ENCODE measurements at regions of chr7 and their contacts with region 1.

Region 1: GRCh38 chr7:151080522-151081169 is at the start of gene FASTK:
- DNase-seq: peak; percentile 71 to 95 (median 87)
- ATAC-seq: peak; percentile 65
- H3K4me3 ChIP-seq: peak within 1 kb of the TSS; percentile 74 to 95
- H3K4me3 Mint-ChIP-seq: peak within 1 kb of the TSS; percentile 85
- H3K27ac ChIP-seq: peak within 1 kb of the TSS; percentile 74 to 91
- H3K27ac Mint-ChIP-seq: peak within 1 kb of the TSS; percentile 85
- H3K4me1 ChIP-seq: peaks cover 57% of the 10 kb centered on the region
- H3K4me1 Mint-ChIP-seq: peaks cover 45% of the 10 kb centered on the region
- H3K27me3 ChIP-seq: no peaks in the 10 kb centered on the region
- H3K27me3 Mint-ChIP-seq: peaks cover 10% of the 10 kb centered on the region
- CTCF ChIP-seq: no peak
- total RNA-seq, gene FASTK: 56.3 to 62.9 TPM

Region 2: DNA sequence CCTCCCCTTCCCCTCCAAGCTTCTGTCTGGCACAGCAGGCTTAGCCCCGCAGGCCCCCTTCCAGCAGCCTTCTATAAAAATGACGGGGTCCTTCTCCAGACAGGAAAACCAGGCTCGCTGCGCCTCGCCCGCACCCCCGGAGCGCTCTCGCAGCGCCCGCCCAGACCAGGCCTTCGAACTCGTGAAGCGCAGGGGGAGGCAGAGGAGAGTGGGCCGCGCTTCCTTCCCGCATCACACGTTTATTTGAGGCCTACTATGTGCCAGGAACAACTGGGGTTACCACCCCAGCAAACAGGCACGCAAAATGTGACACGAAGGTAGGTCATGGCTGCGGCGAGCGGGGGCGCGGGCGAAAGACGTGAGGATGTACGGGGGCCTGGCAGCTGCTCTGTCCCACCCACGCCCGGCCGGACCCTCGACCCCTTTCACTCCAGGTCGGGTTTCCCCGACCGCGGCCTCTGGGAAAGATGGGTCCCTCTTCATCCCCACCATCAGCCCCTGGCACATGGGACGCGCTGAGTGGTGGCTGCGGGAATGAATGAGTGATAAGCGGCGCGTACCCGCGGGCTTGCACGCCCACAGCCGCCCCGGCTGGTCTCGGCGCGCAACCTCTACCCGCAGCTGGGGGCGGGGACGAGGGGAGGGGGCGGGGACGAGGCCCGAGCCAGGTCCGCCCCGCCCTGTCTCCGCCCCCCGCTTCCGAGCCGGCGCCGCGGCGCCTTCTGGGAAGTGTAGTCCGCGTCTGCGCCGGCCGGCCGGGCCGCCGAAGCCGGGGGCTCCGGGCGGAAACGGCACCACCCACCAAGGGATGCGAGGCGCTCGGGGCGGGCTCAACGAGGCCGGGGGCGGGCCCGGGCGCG is 1366.4 kb before region 1 on chr7:
- CTCF ChIA-PET with region 1: no interaction called
- POLR2A ChIA-PET with region 1: no interaction called
- intact Hi-C with region 1: loop called in 1 of 2 experiments (anchors 10 kb)
- DNase-seq: peak; percentile 86 to 97 (median 94)
- ATAC-seq: peak; percentile 95
- H3K4me3 ChIP-seq: peak overlapping the region; percentile 65 to 68
- H3K4me3 Mint-ChIP-seq: peak overlapping the region; percentile 80
- H3K27ac ChIP-seq: peak overlapping the region; percentile 12
- H3K27ac Mint-ChIP-seq: peak overlapping the region; percentile 22
- H3K4me1 ChIP-seq: peaks cover 18% of the 10 kb centered on the region
- H3K4me1 Mint-ChIP-seq: peaks cover 23% of the 10 kb centered on the region
- H3K27me3 ChIP-seq: no peaks in the 10 kb centered on the region
- H3K27me3 Mint-ChIP-seq: no peaks in the 10 kb centered on the region
- CTCF ChIP-seq: no peak

Region 3: GRCh38 chr7:150378853-150379440 is 701.7 kb before region 1 on chr7 and contains the start of gene ZNF775:
- CTCF ChIA-PET with region 1: no interaction called
- POLR2A ChIA-PET with region 1: no interaction called
- intact Hi-C with region 1: loop called in 1 of 2 experiments (anchors 5 kb)
- DNase-seq: peak; percentile 82 to 95 (median 91)
- ATAC-seq: peak; percentile 93
- H3K4me3 ChIP-seq: peak within 1 kb of the TSS; percentile 83 to 84
- H3K4me3 Mint-ChIP-seq: peak within 1 kb of the TSS; percentile 86
- H3K27ac ChIP-seq: peak within 1 kb of the TSS; percentile 10 to 48
- H3K27ac Mint-ChIP-seq: peak within 1 kb of the TSS; percentile 93
- H3K4me1 ChIP-seq: peaks cover 37% of the 10 kb centered on the region
- H3K4me1 Mint-ChIP-seq: peaks cover 53% of the 10 kb centered on the region
- H3K27me3 ChIP-seq: no peaks in the 10 kb centered on the region
- H3K27me3 Mint-ChIP-seq: no peaks in the 10 kb centered on the region
- CTCF ChIP-seq: no peak
- total RNA-seq, gene ZNF775: 0.33 to 0.58 TPM

Region 4: DNA sequence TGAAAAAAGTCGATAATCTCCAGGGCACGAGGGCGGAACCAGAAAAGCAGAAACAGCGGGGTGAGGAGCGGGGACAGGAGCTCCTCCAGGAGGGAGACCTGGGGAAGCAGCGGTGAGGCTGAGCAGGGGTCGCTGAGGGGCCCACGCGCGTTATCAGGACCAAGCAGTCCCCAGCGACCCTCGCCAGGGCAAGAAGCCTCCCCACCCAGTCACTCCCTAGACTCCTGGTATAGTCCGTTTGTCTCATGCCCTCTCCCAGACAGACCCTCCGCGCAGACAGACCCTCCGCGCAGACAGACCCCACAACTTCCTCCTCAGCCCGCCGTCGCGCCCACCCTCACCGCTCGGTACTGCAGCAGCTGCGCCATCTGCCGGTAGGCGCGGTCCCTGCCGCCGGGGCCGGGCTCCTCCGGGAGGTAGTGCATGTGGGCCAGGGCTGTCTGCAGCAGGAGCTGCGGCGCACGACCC is 62.7 kb before region 1 on chr7:
- CTCF ChIA-PET with region 1: interaction called, 11 read pairs
- POLR2A ChIA-PET with region 1: interaction called, 7 read pairs
- intact Hi-C with region 1: loop called in 1 of 2 experiments (anchors 1 kb)
- DNase-seq: peak; percentile 70 to 90 (median 83)
- ATAC-seq: peak; percentile 60
- H3K4me3 ChIP-seq: peak overlapping the region; percentile 40 to 54
- H3K4me3 Mint-ChIP-seq: peak overlapping the region; percentile 83
- H3K27ac ChIP-seq: peak overlapping the region in 1 of 2 experiments; percentile 27
- H3K27ac Mint-ChIP-seq: peak overlapping the region; percentile 39
- H3K4me1 ChIP-seq: peaks cover 61% of the 10 kb centered on the region
- H3K4me1 Mint-ChIP-seq: peaks cover 57% of the 10 kb centered on the region
- H3K27me3 ChIP-seq: peaks cover 0 to 16% of the 10 kb centered on the region in 2 experiments
- H3K27me3 Mint-ChIP-seq: peaks cover 7% of the 10 kb centered on the region
- CTCF ChIP-seq: peak; percentile 99

Region 5: GRCh38 chr7:151057989-151058780 is 22.5 kb before region 1 on chr7:
- CTCF ChIA-PET with region 1: interaction called, 4 read pairs
- POLR2A ChIA-PET with region 1: interaction called, 8 read pairs
- intact Hi-C with region 1: loop called (anchors 1 kb)
- DNase-seq: peak; percentile 93 to 100 (median 97)
- ATAC-seq: peak; percentile 93
- H3K4me3 ChIP-seq: peak overlapping the region; percentile 71 to 83
- H3K4me3 Mint-ChIP-seq: peak overlapping the region; percentile 78
- H3K27ac ChIP-seq: peak overlapping the region; percentile 65 to 87
- H3K27ac Mint-ChIP-seq: peak overlapping the region; percentile 89
- H3K4me1 ChIP-seq: peaks cover 34% of the 10 kb centered on the region
- H3K4me1 Mint-ChIP-seq: peaks cover 41% of the 10 kb centered on the region
- H3K27me3 ChIP-seq: no peaks in the 10 kb centered on the region
- H3K27me3 Mint-ChIP-seq: no peaks in the 10 kb centered on the region
- CTCF ChIP-seq: no peak

Region 6: DNA sequence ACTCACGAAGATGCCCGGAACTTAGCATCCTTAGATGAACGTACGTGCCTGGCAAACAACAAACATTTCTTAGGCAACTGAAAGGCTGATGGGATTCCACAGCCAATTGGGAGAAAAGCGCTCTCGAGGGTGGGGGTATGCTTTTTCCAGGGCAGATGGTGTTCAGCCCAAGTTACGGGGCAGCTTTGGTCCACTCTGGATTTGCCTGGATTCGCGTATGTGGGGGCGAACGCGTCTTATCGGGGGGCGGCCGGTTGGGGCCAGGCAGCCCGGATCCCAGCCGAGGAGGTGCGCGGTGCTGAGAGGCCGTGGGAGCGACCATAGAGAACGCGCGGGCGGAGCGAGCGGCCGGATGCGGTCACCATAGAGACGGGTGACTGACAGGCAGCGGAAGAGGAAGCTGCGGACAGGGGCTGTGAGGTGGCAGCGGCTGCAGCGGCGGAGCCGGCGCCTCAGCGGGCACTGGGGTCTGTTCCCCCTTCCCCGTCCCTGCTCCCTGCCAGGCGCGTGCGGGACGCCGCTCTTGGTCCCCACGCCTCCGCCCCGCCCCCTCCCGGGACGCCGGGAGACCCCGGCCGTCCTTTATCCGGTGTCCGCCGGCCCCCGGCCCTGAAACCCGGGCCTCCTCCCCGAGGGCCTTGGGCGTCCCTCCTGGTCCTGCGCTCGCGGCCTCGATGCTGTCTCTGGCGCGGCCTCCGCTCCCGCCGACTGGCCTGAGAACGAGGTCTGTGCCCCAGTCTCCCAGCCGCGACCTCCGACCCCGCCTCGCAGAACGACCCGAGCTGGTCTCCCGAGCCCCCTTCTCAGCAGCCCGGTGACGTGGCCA is 151.7 kb after region 1 on chr7 and contains the start of gene CHPF2:
- CTCF ChIA-PET with region 1: no interaction called
- POLR2A ChIA-PET with region 1: interaction called, 3 read pairs
- intact Hi-C with region 1: loop called in 1 of 2 experiments (anchors 1 kb)
- DNase-seq: peak; percentile 71 to 94 (median 92)
- ATAC-seq: peak; percentile 74
- H3K4me3 ChIP-seq: peak within 1 kb of the TSS; percentile 76 to 96
- H3K4me3 Mint-ChIP-seq: peak within 1 kb of the TSS; percentile 100
- H3K27ac ChIP-seq: peak within 1 kb of the TSS; percentile 54 to 59
- H3K27ac Mint-ChIP-seq: peak within 1 kb of the TSS; percentile 98
- H3K4me1 ChIP-seq: peaks cover 22% of the 10 kb centered on the region
- H3K4me1 Mint-ChIP-seq: peaks cover 35% of the 10 kb centered on the region
- H3K27me3 ChIP-seq: no peaks in the 10 kb centered on the region
- H3K27me3 Mint-ChIP-seq: no peaks in the 10 kb centered on the region
- CTCF ChIP-seq: no peak
- total RNA-seq, gene CHPF2: 24.7 to 24.9 TPM

Measured in CD8-positive, alpha-beta T cell (primary cell).